CD4-positive, alpha-beta memory T cell (primary cell): ENCODE measurements at regions of chr13 and their contacts with region 1.

Region 1: DNA sequence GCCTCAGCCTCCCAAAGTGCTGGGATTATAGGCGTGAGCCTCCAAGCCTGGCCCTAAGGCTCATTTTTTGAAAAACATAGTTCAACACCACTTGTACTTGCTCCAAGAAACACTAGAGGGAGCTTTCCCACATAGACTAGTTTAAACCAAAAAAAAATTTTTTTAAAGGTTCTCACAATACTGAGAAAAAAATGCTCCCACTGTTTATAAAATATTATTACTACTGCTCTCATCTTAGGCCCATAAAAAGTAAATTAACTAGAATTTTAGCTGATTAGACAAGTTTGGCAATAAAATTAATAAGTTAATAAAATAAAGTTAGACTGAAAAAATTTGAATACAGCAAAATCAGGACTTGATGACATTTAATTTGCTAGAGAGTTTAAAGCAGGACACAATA is 109.5 kb downstream of the TBC1D4 start:
- DNase-seq: peak in 4 of 5 donors; percentile 31 to 42 (median 36)
- H3K4me3 ChIP-seq: no peak overlapping the region
- H3K4me3 Mint-ChIP-seq: no peak overlapping the region
- H3K27ac ChIP-seq: no peak overlapping the region
- H3K27ac Mint-ChIP-seq: no peak overlapping the region
- H3K4me1 ChIP-seq: no peaks in the 10 kb centered on the region
- H3K4me1 Mint-ChIP-seq: no peaks in the 10 kb centered on the region
- H3K27me3 ChIP-seq: no peaks in the 10 kb centered on the region
- H3K27me3 Mint-ChIP-seq: no peaks in the 10 kb centered on the region

Region 2: DNA sequence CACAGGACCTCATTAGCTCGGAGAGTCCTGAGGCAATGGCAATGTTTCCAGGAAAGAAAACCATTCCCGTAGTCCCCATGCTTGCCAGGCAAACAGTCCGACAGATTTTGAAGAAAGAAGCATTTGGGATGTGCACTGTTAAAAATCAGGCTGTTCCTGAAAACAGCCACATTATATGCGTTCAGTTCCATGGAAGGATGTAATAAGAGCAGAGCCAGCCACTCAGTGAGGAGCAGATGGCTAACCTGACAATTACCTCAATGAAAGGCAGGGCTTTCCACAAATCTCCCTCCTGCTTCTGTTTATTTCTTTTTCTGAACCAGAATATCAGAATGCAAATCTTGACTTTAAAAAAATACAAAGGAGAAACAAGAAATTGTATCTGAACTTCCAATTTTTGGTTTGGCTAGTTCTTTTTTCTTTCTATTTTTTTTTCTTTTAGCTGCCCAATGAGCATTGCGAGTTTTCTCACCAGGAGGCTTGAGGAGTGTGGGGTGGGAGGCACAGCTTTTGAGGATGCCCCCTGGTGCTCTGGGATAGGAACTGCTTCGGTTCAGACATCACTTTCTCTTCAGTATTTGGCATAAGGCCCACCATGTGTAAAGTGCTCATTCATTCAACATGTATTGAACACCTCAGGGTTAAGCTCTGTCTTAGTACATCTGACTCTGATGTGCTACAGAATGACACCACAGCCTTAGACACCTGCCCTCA is 14.8 kb before region 1 on chr13:
- CTCF ChIA-PET with region 1: interaction called, 16 read pairs
- POLR2A ChIA-PET with region 1: no interaction called
- intact Hi-C with region 1: no loop called
- DNase-seq: peak; percentile 50 to 62 (median 55)
- H3K4me3 ChIP-seq: no peak overlapping the region
- H3K4me3 Mint-ChIP-seq: no peak overlapping the region
- H3K27ac ChIP-seq: no peak overlapping the region
- H3K27ac Mint-ChIP-seq: no peak overlapping the region
- H3K4me1 ChIP-seq: no peaks in the 10 kb centered on the region
- H3K4me1 Mint-ChIP-seq: peaks cover 0 to 3% (median 1%) of the 10 kb centered on the region in 4 donors
- H3K27me3 ChIP-seq: no peaks in the 10 kb centered on the region
- H3K27me3 Mint-ChIP-seq: peaks cover 0 to 4% of the 10 kb centered on the region in 2 donors

Region 3: DNA sequence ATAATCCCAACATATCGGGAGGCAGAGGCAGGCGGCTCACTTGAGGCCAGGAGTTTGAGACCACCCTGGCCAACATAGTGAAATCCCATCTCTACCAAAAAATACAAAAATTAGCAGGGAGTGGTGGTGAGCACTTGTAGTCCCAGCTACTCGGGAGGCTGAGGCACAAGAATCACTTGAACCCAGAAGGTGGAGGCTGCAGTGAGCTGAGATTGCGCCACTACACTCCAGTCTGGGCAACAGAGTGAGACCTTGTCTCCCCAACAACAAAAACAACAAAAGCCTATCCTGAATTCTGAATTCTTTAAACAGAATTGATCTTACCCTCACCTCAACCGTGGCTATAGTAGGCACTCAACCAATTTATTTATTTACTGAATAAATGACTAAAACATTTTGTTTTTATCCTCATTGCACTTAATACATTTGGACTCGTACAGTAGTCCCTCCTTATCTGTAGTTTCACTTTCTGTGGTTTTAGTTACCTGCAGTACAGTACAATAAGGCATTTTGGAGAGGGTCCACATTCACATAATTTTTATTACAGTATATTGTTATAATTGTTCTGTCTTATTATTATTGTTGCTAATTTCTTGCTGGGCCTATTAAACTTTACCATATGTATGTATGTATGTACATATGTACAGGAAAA is 10.7 kb after region 1 on chr13:
- CTCF ChIA-PET with region 1: interaction called, 12 read pairs
- POLR2A ChIA-PET with region 1: interaction called, 3 read pairs
- intact Hi-C with region 1: no loop called
- DNase-seq: no peak
- H3K4me3 ChIP-seq: no peak overlapping the region
- H3K4me3 Mint-ChIP-seq: no peak overlapping the region
- H3K27ac ChIP-seq: no peak overlapping the region
- H3K27ac Mint-ChIP-seq: no peak overlapping the region
- H3K4me1 ChIP-seq: no peaks in the 10 kb centered on the region
- H3K4me1 Mint-ChIP-seq: peaks cover 0 to 3% (median under 1%) of the 10 kb centered on the region in 4 donors
- H3K27me3 ChIP-seq: no peaks in the 10 kb centered on the region
- H3K27me3 Mint-ChIP-seq: peaks cover 0 to 2% of the 10 kb centered on the region in 2 donors

Region 4: GRCh38 chr13:75482070-75482819 is 109.7 kb after region 1 on chr13 and contains the start of gene TBC1D4:
- CTCF ChIA-PET with region 1: no interaction called
- POLR2A ChIA-PET with region 1: interaction called, 3 read pairs
- intact Hi-C with region 1: loop called (anchors 1 kb)
- DNase-seq: peak; percentile 25 to 38 (median 29)
- H3K4me3 ChIP-seq: peak within 1 kb of the TSS; percentile 29 to 53
- H3K4me3 Mint-ChIP-seq: peak within 1 kb of the TSS; percentile 92 to 98 (median 94)
- H3K27ac ChIP-seq: no peak within 1 kb of the TSS
- H3K27ac Mint-ChIP-seq: peak within 1 kb of the TSS in 3 of 7 donors; percentile 15 to 64 (median 41)
- H3K4me1 ChIP-seq: peaks cover 12% of the 10 kb centered on the region
- H3K4me1 Mint-ChIP-seq: peaks cover 8 to 19% (median 12%) of the 10 kb centered on the region in 4 donors
- H3K27me3 ChIP-seq: no peaks in the 10 kb centered on the region
- H3K27me3 Mint-ChIP-seq: peaks cover 41 to 52% of the 10 kb centered on the region in 2 donors
- total RNA-seq, gene TBC1D4: 63.5 to 67.2 TPM